ENCODE measurements at regions of chr20 and their contacts with region 1.

Region 1: GRCh38 chr20:43728044-43728529 is 1.3 kb upstream of the GTSF1L start:
- DNase-seq: peak; percentile 63
- ATAC-seq: 0 out of 2 replicates have a peak, but pooled peaks have one; percentile 10
- H3K4me3 ChIP-seq: no peak overlapping the region
- H3K27ac ChIP-seq: no peak overlapping the region
- H3K4me1 ChIP-seq: peaks cover 25% of the 10 kb centered on the region
- H3K27me3 ChIP-seq: no peaks in the 10 kb centered on the region
- CTCF ChIP-seq: no peak

Region 2: DNA sequence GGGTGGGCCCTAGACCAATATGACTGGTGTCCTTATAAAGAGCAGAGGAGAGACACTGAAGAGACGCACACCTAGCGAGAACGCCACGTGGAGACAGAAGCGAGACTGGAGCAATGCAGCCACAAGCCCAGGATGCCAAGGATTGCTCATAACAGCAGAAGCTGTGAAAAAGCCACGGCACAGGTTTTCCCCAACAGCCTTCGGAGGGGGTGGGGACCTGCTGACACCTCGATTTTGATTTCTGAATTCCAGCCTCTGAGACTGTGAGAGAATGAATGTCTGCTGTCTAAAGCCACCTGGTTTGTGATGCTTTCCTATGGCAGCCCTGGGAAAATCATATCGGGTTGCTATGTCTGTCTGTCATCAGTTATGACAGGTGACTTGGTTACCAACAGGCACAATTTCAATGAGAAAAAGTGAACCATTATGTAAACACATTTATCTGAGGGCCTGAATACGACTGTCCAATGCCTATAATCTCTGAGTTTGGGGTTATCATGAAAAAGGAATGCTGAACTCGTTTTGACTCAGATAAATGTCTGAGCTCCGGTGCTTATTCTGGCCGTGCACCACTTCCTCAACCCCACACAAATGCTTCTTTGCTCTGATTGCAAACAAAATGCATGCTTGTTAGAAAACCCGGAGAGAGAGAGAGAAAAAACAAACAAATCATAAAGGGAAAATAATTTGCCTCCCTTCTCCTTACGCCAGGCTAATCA is 1308.1 kb before region 1 on chr20:
- CTCF ChIA-PET with region 1: no interaction called
- POLR2A ChIA-PET with region 1: interaction called, 15 read pairs
- intact Hi-C with region 1: no loop called
- DNase-seq: no peak
- ATAC-seq: no peak
- H3K4me3 ChIP-seq: no peak overlapping the region
- H3K27ac ChIP-seq: no peak overlapping the region
- H3K4me1 ChIP-seq: no peaks in the 10 kb centered on the region
- H3K27me3 ChIP-seq: no peaks in the 10 kb centered on the region
- CTCF ChIP-seq: no peak